Activated CD8-positive, alpha-beta T cell treated with anti-CD3 and anti-CD28 coated beads, Interleukin-2, amount 10 ng/mL, durations not matched to agents 7 days and 5 days (primary cell): ENCODE measurements at regions of chr6 and their contacts with region 1.

Region 1: DNA sequence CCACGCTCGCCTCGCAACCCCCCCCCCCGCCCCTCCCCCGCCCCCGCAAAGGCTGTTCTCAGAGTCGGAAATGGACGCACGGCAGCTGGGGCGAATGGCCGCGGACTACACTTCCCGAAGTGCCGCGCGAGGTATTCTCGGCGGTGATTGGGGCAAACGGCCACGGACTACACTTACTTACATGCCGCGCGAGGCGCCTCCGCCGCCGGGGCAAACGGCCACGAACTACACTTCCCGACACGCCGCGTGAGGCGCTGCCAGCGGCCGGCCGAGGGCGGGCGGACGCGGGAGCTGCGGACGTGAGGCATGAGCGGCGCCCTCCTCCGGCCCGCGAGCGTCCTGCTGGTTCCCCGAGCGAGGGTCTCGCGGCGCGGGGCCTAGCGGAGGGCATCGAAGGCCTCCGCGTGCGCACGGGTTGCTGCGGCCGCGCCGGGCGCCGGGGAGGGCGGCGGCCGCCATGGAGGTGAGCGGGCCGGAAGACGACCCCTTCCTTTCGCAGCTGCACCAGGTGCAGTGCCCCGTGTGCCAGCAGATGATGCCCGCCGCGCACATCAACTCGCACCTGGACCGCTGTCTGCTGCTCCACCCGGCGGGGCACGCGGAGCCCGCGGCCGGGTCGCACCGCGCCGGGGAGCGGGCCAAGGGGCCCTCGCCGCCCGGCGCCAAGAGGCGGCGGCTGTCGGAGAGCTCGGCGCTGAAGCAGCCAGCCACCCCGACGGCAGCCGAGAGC is at the start of gene WRNIP1:
- DNase-seq: peak; percentile 98
- ATAC-seq: peak; percentile 91
- H3K4me3 Mint-ChIP-seq: peak within 1 kb of the TSS; percentile 92
- H3K27ac Mint-ChIP-seq: peak within 1 kb of the TSS; percentile 97
- H3K4me1 Mint-ChIP-seq: peaks cover 55% of the 10 kb centered on the region
- H3K27me3 Mint-ChIP-seq: no peaks in the 10 kb centered on the region
- total RNA-seq, gene WRNIP1: 48.2 to 49.6 TPM

Region 2: DNA sequence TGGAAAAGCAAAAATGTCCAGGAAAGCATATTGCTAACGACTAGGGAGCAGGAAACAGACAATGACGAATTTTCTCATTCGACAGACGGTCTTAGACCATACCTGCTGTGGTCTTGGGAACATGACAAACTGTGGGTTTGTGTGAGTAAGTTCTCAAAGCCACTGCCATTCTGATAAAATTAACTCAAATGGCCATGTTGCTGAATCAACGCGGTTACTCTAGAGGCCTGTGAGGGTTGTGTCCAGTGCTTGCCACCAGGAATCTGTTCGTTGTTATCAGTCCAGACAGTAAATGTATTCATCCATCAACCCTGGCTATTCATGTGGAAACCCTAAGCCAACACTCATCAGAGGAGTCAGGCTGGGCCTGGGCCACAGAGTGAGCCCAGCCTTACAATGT is 138.9 kb before region 1 on chr6:
- CTCF ChIA-PET with region 1: no interaction called
- POLR2A ChIA-PET with region 1: no interaction called
- DNase-seq: no peak
- ATAC-seq: no peak
- H3K4me3 Mint-ChIP-seq: no peak overlapping the region
- H3K27ac Mint-ChIP-seq: no peak overlapping the region
- H3K4me1 Mint-ChIP-seq: peaks cover 4% of the 10 kb centered on the region
- H3K27me3 Mint-ChIP-seq: peaks cover 16% of the 10 kb centered on the region

Region 3: DNA sequence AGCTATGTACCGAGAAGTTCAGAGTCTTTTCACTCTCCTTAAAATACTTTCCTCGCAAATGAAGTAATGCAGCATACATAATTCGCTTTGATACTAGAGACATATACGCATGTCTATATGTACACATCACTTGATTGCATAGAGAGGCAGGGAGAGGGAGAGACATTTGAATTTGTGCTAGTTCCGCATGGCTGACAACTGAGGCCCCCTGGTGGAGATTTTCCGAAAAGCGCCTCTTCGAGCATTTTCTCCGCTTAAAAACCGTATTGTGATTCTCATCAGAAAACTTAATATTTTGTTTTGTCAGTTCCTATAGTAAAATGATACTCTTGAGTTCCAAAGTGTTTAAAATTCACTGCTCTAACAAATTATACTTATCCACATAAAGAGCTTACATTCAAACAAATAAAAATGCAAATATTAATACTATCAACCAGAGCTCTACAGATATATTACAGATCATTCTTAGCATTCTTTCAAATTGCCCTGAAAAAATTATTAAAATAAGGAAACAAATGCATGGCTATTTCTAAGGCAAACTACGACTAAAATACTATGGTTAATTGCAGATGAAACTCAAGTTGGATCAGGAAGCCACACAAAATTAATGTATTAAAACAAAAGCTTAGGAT is 15.2 kb before region 1 on chr6:
- CTCF ChIA-PET with region 1: interaction called, 109 read pairs
- POLR2A ChIA-PET with region 1: interaction called, 6 read pairs
- DNase-seq: peak; percentile 79
- ATAC-seq: peak; percentile 60
- H3K4me3 Mint-ChIP-seq: no peak overlapping the region
- H3K27ac Mint-ChIP-seq: no peak overlapping the region
- H3K4me1 Mint-ChIP-seq: peaks cover 23% of the 10 kb centered on the region
- H3K27me3 Mint-ChIP-seq: peaks cover 43% of the 10 kb centered on the region

Region 4: GRCh38 chr6:3176562-3177355 is 411.4 kb after region 1 on chr6:
- CTCF ChIA-PET with region 1: no interaction called
- POLR2A ChIA-PET with region 1: no interaction called
- DNase-seq: peak; percentile 43
- ATAC-seq: peak; percentile 70
- H3K4me3 Mint-ChIP-seq: no peak overlapping the region
- H3K27ac Mint-ChIP-seq: no peak overlapping the region
- H3K4me1 Mint-ChIP-seq: peaks cover 5% of the 10 kb centered on the region
- H3K27me3 Mint-ChIP-seq: peaks cover 4% of the 10 kb centered on the region